ENCODE measurements at regions of chr3 and their contacts with region 1.

Region 1: GRCh38 chr3:10164546-10165393 is at the start of gene IRAK2:
- DNase-seq: peak; percentile 67 to 68
- ATAC-seq: peak; percentile 90 to 92
- H3K4me3 ChIP-seq: peak within 1 kb of the TSS; percentile 73
- H3K27ac ChIP-seq: peak within 1 kb of the TSS; percentile 78 to 89
- H3K4me1 ChIP-seq: peaks cover 13% of the 10 kb centered on the region
- CTCF ChIP-seq: peak; percentile 68
- EP300 ChIP-seq: no peak
- POLR2A ChIP-seq: peak; percentile 91
- RAD21 ChIP-seq: peak; percentile 2 to 56; a peak in 3 of 5 replicates
- polyA plus RNA-seq, gene IRAK2: 12.5 and 15.3 TPM in 2 replicates

Region 2: DNA sequence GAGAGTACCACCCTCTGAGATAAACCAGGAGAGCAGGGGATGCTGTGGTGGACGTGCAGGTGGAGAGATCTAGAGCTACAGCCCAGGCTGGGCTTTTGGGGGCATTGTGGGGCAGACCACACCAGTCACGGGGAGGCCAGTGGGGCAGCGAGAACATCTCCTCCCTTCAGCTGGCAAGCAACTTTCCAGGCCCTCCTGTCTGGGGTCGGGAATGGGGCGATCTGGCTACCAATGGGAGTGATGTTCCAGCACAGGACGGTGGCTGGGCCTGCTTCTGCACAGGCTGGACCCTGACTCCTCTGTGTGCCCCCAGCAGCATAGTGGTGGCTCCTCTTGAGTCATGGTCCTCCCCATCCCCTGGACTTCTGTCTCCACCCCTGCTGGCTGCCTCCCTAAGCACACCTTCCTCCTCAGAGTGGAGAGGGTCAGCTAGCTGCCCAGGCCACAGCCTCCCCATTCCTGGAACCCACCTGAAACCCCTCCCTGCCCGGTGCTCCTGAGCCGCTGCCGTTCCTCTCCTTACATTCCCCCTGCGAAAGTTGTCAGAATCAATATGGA is 16.0 kb after region 1 on chr3:
- CTCF ChIA-PET with region 1: interaction called, 13 read pairs
- POLR2A ChIA-PET with region 1: no interaction called
- DNase-seq: no peak
- ATAC-seq: peak; percentile 17 to 28; a peak in 3 of 6 replicates
- H3K4me3 ChIP-seq: no peak overlapping the region
- H3K27ac ChIP-seq: no peak overlapping the region; a peak in 1 of 6 replicates
- H3K4me1 ChIP-seq: no peaks in the 10 kb centered on the region
- CTCF ChIP-seq: no peak
- EP300 ChIP-seq: no peak
- POLR2A ChIP-seq: no peak
- RAD21 ChIP-seq: no peak

Region 3: DNA sequence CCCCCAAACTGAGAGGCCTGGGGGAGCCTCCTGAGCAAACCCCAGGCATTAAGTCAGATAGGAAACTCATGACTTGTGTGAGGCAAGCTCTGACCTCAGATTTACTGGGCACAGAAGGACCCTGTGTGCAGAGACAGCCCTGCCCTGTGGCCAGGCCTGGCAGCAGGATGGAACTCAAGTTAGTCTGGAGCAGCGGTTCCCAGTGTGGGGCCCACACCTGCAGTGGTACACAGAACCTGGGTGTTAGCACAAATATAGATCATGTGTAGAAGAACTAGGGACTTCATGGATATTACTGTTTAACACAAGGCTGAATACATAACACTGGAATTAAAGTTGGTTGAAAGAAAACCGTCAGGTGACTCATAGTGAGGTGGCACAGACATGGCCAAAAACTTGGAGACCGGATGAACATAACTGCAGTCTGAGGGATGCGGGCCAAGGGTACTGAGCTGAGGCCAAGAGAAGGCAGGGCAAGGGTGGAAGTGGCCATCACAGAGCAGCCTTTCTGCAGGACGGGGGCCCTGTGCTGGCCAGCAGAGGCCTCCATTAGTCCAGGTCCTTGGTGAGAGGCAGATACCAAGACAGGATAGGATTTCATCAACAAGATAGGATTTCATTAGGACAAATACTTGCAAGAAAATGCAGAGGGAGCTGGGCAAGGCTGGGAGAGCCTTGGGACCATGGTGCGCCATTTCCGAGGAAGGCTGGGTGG is 40.8 kb after region 1 on chr3:
- CTCF ChIA-PET with region 1: interaction called, 20 read pairs
- POLR2A ChIA-PET with region 1: interaction called, 13 read pairs
- DNase-seq: peak; percentile 82 to 83
- ATAC-seq: peak; percentile 84 to 88
- H3K4me3 ChIP-seq: no peak overlapping the region
- H3K27ac ChIP-seq: peak overlapping the region; percentile 83 to 89
- H3K4me1 ChIP-seq: peaks cover 58% of the 10 kb centered on the region
- CTCF ChIP-seq: no peak
- EP300 ChIP-seq: peak; percentile 14 to 51; a peak in 2 of 5 replicates
- POLR2A ChIP-seq: no peak
- RAD21 ChIP-seq: 0 out of 5 replicates have a peak, but pooled peaks of 1 of the 2 experiments have one; percentile 18

Region 4: GRCh38 chr3:10224784-10225665 is 60.3 kb after region 1 on chr3:
- CTCF ChIA-PET with region 1: interaction called, 33 read pairs
- POLR2A ChIA-PET with region 1: no interaction called
- DNase-seq: peak; percentile 78 to 84
- ATAC-seq: peak; percentile 83 to 85
- H3K4me3 ChIP-seq: no peak overlapping the region
- H3K27ac ChIP-seq: peak overlapping the region; percentile 23 to 84; a peak in 3 of 6 replicates
- H3K4me1 ChIP-seq: peaks cover 43% of the 10 kb centered on the region
- CTCF ChIP-seq: peak; percentile 94
- EP300 ChIP-seq: peak in 1 of 2 experiments; percentile 24; a peak in 1 of 5 replicates
- POLR2A ChIP-seq: no peak
- RAD21 ChIP-seq: peak; percentile 97 to 99

Region 5: GRCh38 chr3:10248184-10249080 is 83.7 kb after region 1 on chr3 and contains the start of gene TATDN2:
- CTCF ChIA-PET with region 1: no interaction called
- POLR2A ChIA-PET with region 1: interaction called, 18 read pairs
- DNase-seq: peak; percentile 97 to 99
- ATAC-seq: peak; percentile 96 to 99
- H3K4me3 ChIP-seq: peak within 1 kb of the TSS; percentile 72
- H3K27ac ChIP-seq: peak within 1 kb of the TSS; percentile 82 to 95
- H3K4me1 ChIP-seq: peaks cover 20% of the 10 kb centered on the region
- CTCF ChIP-seq: no peak
- EP300 ChIP-seq: no peak
- POLR2A ChIP-seq: peak; percentile 68
- RAD21 ChIP-seq: no peak
- polyA plus RNA-seq, gene TATDN2: 22.4 and 27.6 TPM in 2 replicates